Cardiac septum (tissue), 1 donor: ENCODE measurements at regions of chr2 and their contacts with region 1.

Region 1: DNA sequence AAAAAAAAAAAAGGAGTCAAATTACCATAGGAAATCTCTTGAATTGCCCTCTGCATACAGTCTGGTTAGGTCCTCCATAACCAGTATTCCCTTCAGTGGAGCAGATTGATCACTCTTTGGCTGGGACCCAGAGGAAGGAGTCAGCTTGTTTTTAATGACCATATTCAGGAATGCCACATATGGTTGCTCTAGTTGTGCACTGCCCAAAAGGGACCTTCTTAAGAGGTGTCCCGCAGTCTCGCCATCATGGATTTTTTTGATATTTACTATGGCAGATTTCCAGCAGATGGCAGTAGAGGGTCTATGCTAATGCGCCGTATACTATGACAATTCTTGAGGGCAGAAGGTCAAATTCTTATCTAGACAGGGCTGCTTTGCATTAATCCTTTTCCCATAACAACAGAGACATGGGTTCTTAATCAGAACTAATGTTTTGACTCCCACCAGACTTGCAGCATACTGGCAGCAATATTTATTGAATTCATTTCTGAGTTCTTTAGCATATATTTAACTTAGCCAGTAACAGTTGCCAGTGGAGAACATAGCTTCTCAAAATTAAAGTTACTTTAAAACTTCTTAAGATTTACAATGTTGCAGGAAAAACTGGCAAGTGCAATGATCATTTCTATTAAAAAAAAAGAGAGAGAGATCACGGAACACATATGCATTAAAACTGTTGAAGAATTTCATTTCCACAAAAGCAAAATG is 31.8 kb upstream of the INPP4A start:
- DNase-seq: no peak

Region 2: DNA sequence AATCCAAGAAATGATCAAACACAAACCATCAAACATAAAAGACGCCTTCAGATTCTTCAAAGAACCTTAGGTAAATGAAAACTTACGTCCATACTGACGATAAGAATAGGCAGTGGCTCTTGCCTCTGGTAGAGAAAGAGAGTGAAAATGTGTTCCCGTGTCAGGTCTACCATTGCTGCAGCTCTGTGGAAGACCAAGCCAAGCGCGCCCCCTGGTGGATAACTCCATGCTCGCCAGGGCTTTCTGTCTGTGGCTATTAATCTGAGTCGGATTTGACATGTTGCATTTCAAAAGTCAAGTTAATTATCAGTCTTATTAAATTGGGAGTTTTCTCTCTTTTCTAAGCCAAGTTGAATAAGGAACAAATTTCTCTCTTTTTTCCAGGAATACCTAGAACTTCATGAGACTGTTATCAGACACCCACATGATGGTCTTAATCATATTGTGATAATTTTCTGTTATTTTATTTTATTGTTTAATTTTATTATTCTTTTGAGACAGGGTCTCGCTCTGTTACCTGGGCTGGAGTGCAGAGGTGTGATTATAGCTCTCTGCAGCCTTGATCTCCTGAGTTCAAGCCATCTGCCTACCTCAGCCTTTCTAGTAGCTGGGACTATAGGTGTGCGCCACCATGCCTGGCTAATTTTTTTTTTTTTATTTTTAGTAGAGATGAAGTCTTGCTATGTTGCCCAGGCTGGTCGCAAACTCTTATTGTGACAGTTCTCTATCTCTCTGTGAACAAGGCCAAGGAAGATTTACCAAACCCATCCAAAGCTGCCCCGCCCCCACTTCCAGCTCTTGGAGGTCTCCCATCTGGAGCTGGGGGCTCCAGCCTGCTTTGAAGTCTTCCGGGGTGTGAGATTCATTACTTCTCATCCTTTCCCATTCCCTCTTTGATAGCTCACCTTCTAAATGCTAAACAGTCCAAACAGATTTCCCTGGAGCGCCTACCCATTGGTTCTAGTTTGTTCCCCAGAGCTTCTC is 715.4 kb before region 1 on chr2:
- intact Hi-C with region 1: no loop called
- DNase-seq: peak; percentile 95

Region 3: GRCh38 chr2:98518090-98518489 is 105.2 kb after region 1 on chr2:
- intact Hi-C with region 1: no loop called
- DNase-seq: no peak

Region 4: GRCh38 chr2:98568881-98569793 is 156.2 kb after region 1 on chr2:
- intact Hi-C with region 1: loop called (anchors 10 kb)
- DNase-seq: peak; percentile 78

Region 5: DNA sequence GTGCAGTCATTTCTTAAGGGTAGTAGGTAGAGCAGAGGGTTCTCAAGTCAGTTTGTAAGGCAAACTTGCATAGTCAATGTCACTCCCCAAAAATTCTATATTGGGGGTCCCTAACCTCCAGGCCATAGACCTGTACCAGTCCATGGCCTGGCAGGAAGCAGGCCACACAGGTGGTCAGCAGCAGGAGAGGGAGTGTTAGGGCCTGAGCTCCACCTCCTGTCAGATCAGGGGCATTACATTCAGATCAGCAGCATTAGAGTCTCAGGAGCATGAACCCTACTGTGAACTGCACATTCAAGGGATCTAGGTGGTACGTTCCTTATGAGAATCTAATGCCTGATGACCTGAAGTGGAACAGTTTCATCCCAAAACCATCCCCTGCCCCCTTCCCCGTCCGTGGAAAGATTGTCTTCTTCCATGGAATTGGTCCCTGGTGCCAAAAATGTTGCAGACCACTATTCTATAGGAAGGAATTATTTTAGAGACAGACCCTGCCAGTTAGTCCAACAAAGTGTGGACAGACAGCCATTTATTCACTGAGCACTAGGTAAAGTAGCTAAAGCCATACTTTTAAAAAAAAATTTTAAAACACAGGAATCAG is 188.7 kb after region 1 on chr2:
- intact Hi-C with region 1: loop called (anchors 5 kb)
- DNase-seq: no peak

Region 6: DNA sequence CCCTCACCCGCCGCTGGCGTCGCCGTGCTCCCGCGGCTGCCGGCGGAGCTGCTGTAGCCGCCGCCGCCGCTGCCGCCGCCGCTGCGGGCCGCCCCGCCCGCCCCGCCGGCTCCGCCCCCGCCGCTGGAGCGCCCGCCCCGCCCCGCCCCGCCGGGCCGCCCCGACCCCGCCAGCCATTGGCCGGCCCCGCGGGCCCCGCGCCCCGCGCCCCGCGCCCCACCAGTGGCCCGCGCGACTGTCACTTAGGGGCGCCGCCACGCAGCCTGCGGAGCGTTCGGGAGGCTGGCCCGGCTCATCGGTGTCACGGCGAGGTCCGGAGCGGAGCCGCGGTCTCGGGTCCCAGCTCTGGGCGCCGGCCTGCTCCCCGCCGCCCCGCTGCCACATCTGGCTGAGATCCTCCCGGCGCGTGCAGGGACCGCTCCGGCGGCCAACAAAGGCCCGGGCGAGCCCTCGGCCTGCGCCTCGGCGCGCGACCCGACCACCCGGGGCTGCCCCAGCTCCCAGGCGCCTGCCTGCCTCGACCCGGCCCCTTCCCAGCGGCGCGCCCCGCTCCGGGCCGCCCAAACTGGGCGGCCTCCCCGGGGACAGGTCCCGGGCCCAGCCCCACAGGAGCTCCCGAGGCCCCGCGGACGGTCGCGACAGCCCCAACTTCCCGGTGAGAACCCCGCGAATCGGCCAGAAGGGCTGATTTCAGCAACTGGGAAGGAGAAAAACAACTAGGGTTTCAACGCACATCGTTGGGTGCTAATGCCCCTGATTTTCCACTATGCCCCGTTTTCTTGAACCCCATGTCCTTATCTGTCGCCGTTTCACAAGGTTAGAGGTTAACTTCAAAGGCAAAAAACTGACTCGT is 318.4 kb after region 1 on chr2 and contains the start of gene MGAT4A:
- intact Hi-C with region 1: no loop called
- DNase-seq: peak; percentile 90
- total RNA-seq, gene MGAT4A: 16.3 TPM